ENCODE measurements at regions of chr16 and their contacts with region 1.

Region 1: GRCh38 chr16:54286090-54286993 is at the start of gene IRX3:
- DNase-seq: peak; percentile 95
- H3K4me3 ChIP-seq: peak within 1 kb of the TSS; percentile 54 to 87
- H3K27ac ChIP-seq: peak within 1 kb of the TSS; percentile 97 to 98
- H3K4me1 ChIP-seq: no peaks in the 10 kb centered on the region
- H3K27me3 ChIP-seq: no peaks in the 10 kb centered on the region
- CTCF ChIP-seq: peak in 1 of 4 experiments; percentile 11
- POLR2A ChIP-seq: peak; percentile 54
- total RNA-seq, gene IRX3: 33.2 to 95.1 TPM

Region 2: DNA sequence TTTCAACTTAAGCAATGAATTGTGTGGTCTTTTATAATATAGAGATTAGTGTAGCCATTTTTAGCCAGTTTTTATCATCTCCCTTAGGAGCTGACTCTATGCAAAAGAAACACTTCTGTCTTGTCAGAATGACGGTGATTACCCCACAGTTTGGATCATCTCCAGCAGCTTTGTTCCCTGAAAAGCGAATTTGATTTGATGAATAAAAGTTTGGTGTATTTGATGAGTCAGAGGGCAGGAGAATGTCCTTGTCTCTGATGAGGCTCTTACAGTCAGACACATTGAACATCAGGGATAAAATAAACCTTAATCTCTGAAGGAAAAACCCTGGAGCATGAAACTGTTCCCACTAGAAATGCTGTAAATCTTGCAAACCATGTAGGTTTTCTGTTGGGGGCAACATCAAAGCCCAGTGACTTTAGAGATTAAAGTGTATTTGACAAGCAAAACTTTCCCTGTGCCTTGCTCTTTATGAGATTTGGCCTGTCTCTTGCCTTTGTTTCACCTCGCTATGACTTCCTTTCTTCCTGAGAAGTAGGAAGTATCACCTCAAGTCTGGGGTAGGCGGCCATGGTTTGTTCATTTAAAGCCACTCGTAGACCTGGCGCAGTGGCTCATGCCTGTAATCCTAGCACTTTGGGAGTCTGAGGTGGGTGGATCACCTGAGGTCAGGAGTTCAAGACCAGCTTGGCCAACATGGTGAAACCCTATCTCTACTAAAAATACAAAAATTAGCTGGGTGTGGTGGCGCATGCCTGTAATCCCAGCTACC is 373.1 kb before region 1 on chr16:
- intact Hi-C with region 1: loop called (anchors 10 kb)
- DNase-seq: no peak
- H3K4me3 ChIP-seq: no peak overlapping the region
- H3K27ac ChIP-seq: no peak overlapping the region
- H3K4me1 ChIP-seq: no peaks in the 10 kb centered on the region
- H3K27me3 ChIP-seq: no peaks in the 10 kb centered on the region
- CTCF ChIP-seq: no peak
- POLR2A ChIP-seq: no peak

Region 3: GRCh38 chr16:53925107-53925410 is 361.3 kb before region 1 on chr16:
- intact Hi-C with region 1: no loop called
- DNase-seq: no peak
- H3K4me3 ChIP-seq: no peak overlapping the region
- H3K27ac ChIP-seq: no peak overlapping the region
- H3K4me1 ChIP-seq: no peaks in the 10 kb centered on the region
- H3K27me3 ChIP-seq: no peaks in the 10 kb centered on the region
- CTCF ChIP-seq: no peak
- POLR2A ChIP-seq: no peak

Region 4: GRCh38 chr16:54107583-54108202 is 178.6 kb before region 1 on chr16:
- intact Hi-C with region 1: no loop called
- DNase-seq: no peak
- H3K4me3 ChIP-seq: no peak overlapping the region
- H3K27ac ChIP-seq: no peak overlapping the region
- H3K4me1 ChIP-seq: no peaks in the 10 kb centered on the region
- H3K27me3 ChIP-seq: no peaks in the 10 kb centered on the region
- CTCF ChIP-seq: no peak
- POLR2A ChIP-seq: no peak

Region 5: GRCh38 chr16:54233615-54234014 is 52.7 kb before region 1 on chr16:
- intact Hi-C with region 1: no loop called
- DNase-seq: no peak
- H3K4me3 ChIP-seq: no peak overlapping the region
- H3K27ac ChIP-seq: no peak overlapping the region
- H3K4me1 ChIP-seq: no peaks in the 10 kb centered on the region
- H3K27me3 ChIP-seq: no peaks in the 10 kb centered on the region
- CTCF ChIP-seq: no peak
- POLR2A ChIP-seq: no peak

Measured in prostate gland (tissue), 2 donors.